ENCODE measurements at regions of chr4 and their contacts with region 1.

Region 1: GRCh38 chr4:112119353-112119783 is 25.9 kb upstream of the FAM241A start:
- DNase-seq: peak; percentile 76
- H3K4me3 Mint-ChIP-seq: peak overlapping the region; percentile 58
- H3K27ac Mint-ChIP-seq: peak overlapping the region; percentile 97
- H3K4me1 Mint-ChIP-seq: peaks cover 21% of the 10 kb centered on the region
- H3K27me3 Mint-ChIP-seq: peaks cover 6% of the 10 kb centered on the region

Region 2: GRCh38 chr4:112069110-112069509 is 50.3 kb before region 1 on chr4:
- intact Hi-C with region 1: no loop called
- DNase-seq: no peak
- H3K4me3 Mint-ChIP-seq: no peak overlapping the region
- H3K27ac Mint-ChIP-seq: no peak overlapping the region
- H3K4me1 Mint-ChIP-seq: no peaks in the 10 kb centered on the region
- H3K27me3 Mint-ChIP-seq: peaks cover 37% of the 10 kb centered on the region

Region 3: DNA sequence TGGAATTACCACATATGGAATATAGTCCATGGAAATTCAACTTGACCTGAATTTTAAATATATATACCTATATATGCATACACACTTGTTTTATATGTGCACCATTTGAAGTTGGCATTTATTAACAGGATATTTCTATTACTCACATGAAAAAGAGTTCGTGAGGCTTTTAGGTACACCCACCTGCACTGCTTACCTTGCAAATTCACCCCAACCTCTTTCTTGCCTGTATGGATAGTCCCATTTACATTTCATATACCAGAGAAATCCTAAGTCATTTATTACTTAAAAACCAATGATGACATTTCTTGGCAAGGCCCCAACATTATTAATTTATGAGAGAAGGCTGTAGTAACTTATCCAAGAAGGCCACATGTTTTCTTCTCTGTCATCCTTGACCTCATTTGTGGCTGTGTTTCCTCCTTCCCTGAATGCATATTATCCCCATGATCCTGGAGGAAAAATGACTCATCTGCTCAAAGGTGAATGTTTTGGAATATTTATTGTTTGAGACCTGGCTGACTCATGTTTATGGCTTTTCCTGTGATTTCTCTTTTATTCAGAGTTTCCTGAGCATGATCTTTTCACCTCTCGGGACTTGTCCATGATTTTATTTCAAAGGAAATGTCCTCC is 36.3 kb before region 1 on chr4:
- intact Hi-C with region 1: no loop called
- DNase-seq: no peak
- H3K4me3 Mint-ChIP-seq: no peak overlapping the region
- H3K27ac Mint-ChIP-seq: no peak overlapping the region
- H3K4me1 Mint-ChIP-seq: peaks cover 5% of the 10 kb centered on the region
- H3K27me3 Mint-ChIP-seq: peaks cover 18% of the 10 kb centered on the region

Region 4: DNA sequence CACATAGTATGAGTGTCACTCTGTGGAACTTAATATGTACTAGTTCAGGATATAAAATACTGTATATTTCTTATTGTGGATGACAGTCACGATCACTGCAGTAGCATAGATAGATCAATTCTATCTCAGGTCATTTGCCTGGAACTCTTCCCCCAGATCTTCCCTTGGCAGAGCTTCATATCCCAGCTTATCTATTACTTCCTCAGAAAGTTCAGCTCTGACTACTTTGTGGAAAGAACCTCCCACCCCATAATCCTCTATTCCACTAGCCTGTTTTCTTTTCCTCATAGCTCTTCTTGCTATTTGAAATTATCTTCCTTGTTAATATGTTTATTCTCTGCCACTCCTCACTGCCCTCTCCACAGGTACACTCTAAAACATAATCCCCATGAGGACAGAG is 36.7 kb after region 1 on chr4:
- intact Hi-C with region 1: no loop called
- DNase-seq: no peak
- H3K4me3 Mint-ChIP-seq: no peak overlapping the region
- H3K27ac Mint-ChIP-seq: no peak overlapping the region
- H3K4me1 Mint-ChIP-seq: peaks cover 23% of the 10 kb centered on the region
- H3K27me3 Mint-ChIP-seq: no peaks in the 10 kb centered on the region

Region 5: GRCh38 chr4:112290341-112290740 is 171.0 kb after region 1 on chr4:
- intact Hi-C with region 1: loop called (anchors 2 kb)
- DNase-seq: peak; percentile 63
- H3K4me3 Mint-ChIP-seq: peak overlapping the region; percentile 14
- H3K27ac Mint-ChIP-seq: peak overlapping the region; percentile 80
- H3K4me1 Mint-ChIP-seq: peaks cover 48% of the 10 kb centered on the region
- H3K27me3 Mint-ChIP-seq: no peaks in the 10 kb centered on the region

Region 6: GRCh38 chr4:113146876-113147358 is 1027.5 kb after region 1 on chr4:
- intact Hi-C with region 1: no loop called
- DNase-seq: peak; percentile 63
- H3K4me3 Mint-ChIP-seq: peak overlapping the region; percentile 70
- H3K27ac Mint-ChIP-seq: peak overlapping the region; percentile 85
- H3K4me1 Mint-ChIP-seq: peaks cover 18% of the 10 kb centered on the region
- H3K27me3 Mint-ChIP-seq: peaks cover 7% of the 10 kb centered on the region

Measured in activated CD4-positive, alpha-beta T cell treated with anti-CD3 and anti-CD28 coated beads, Interleukin-2, amount 10 ng/mL, durations not matched to agents 24 days and 14 days (primary cell).